CD4-positive, alpha-beta T cell (primary cell): ENCODE measurements at regions of chr5 and their contacts with region 1.

Region 1: DNA sequence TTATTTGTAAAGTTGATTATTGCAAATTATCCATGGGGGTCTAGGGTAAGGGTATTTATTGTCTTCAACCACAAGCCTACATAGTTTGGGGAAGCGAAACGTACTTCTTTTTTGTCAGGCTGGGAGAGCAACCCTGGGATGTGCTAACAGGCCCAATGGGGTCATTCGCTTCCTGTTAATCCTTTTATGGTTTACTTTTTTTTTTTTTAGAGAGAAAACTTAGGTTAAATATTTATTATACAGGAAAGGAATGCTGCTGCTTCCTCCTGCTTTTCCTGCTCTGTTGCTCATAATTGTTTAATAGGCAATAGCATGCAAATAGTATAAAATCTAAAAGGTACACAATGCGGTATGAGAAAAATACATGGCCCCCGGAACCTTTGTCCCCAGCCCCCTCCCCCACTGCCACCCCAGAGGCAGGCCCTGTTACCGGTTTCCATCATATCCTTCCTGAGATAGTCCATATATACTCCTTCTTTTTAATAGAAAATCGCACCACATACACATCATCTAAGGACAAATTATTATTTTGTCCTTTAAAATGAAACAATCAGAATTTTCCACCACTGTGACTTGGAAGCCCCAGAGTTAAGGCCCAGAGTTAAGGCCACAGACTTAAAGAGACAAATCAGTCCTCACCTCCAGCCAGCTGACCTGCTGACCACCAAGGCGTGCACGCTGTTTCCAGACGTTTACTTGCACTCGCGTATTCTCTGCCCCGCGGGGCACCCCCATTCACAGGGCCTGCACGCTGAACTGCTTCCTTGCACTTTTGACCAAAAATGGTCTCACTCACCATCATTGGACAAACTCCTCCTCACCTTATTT is 83.9 kb downstream of the NDFIP1 start:
- DNase-seq: no peak
- ATAC-seq: no peak
- H3K4me3 ChIP-seq: no peak overlapping the region
- H3K4me3 Mint-ChIP-seq: no peak overlapping the region
- H3K27ac ChIP-seq: no peak overlapping the region
- H3K27ac Mint-ChIP-seq: no peak overlapping the region
- H3K4me1 ChIP-seq: no peaks in the 10 kb centered on the region
- H3K4me1 Mint-ChIP-seq: no peaks in the 10 kb centered on the region
- H3K27me3 ChIP-seq: no peaks in the 10 kb centered on the region
- H3K27me3 Mint-ChIP-seq: no peaks in the 10 kb centered on the region
- CTCF ChIP-seq: no peak

Region 2: GRCh38 chr5:142239394-142240159 is 47.1 kb after region 1 on chr5:
- CTCF ChIA-PET with region 1: no interaction called
- POLR2A ChIA-PET with region 1: no interaction called
- intact Hi-C with region 1: loop called in 1 of 2 experiments (anchors 5 kb)
- DNase-seq: no peak
- ATAC-seq: no peak
- H3K4me3 ChIP-seq: no peak overlapping the region
- H3K4me3 Mint-ChIP-seq: no peak overlapping the region
- H3K27ac ChIP-seq: no peak overlapping the region
- H3K27ac Mint-ChIP-seq: no peak overlapping the region
- H3K4me1 ChIP-seq: no peaks in the 10 kb centered on the region
- H3K4me1 Mint-ChIP-seq: peaks cover 6% of the 10 kb centered on the region
- H3K27me3 ChIP-seq: peaks cover 0 to 3% of the 10 kb centered on the region in 2 experiments
- H3K27me3 Mint-ChIP-seq: no peaks in the 10 kb centered on the region
- CTCF ChIP-seq: no peak